ENCODE measurements at regions of chr17 and their contacts with region 1.

Region 1: DNA sequence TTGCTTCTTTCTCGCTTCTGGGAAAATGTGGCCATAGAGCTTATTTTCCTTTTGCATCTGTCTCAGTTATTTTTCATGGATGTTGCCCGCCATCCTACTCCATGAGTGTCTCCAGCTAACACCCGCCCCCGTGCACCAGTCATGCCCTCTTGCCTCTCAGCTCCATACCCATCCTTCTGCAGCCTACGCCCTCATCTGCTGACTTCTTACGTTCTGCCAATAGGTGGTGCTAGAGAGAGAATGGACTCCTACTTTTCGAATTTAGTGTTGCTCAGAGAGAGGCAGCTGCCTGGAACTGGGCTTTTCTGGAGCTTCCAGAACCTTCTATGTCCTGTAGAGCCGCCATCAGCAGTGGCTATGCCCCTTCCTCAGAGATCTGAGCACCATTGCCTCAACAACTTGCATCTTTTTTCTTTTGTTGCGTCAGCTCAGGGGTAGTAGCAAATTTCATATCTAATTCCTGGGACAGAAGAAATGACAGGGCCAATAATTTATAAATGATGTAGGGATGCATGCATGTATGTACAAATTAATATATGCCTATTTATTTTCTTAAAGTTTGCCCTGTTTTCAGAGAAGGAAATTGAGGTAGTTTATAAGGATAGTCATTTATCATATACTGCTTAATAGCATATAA is 119.7 kb upstream of the MYOCD start:
- DNase-seq: no peak
- H3K4me3 ChIP-seq: no peak overlapping the region
- CTCF ChIP-seq: peak in 1 of 3 donors; percentile 22
- POLR2A ChIP-seq: no peak

Region 2: DNA sequence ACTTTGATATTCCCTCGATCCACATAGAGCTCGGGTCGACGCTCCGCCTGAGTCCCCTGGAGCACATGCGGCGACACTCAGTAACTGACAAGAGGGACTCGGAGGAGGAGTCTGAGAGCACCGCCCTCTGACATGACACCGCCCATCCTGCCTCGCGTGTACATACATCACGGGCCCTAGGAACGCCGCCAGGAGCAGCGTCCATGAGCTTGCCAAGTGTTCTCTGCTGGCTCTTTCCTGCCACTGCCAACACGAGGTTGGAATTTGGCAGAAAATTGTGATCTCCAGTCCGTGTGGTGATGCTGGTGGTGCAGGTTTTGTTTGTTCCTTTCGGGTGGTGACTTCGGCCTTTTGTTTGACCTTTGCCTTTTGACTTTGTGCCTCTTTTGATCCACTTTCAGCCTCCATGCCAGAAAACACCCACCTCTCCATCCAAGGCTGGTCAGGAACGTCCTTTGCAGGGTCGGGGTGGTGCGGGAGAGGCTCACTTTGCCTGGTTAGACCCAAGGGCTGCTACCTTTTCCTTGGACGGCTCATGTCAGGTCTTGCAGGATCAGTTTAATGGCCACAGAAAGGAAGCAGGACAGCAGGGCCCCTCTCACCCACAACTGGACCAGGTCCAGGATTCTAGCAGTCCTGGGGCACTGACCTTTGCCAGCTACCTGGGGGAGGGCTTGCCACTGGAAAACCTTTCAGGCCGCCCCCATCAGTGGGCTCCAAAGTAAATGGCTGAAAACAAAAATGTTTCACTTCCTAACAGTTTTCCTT is 444.2 kb after region 1 on chr17:
- intact Hi-C with region 1: loop called (anchors 10 kb)
- DNase-seq: peak in 1 of 2 donors; percentile 27
- H3K4me3 ChIP-seq: no peak overlapping the region
- CTCF ChIP-seq: no peak
- POLR2A ChIP-seq: no peak